ENCODE measurements at regions of chr21 and their contacts with region 1.

Region 1: GRCh38 chr21:42047821-42048613 is 23.1 kb upstream of the UMODL1 start:
- DNase-seq: peak; percentile 99
- ATAC-seq: peak; percentile 91
- H3K4me3 ChIP-seq: no peak overlapping the region
- H3K27ac ChIP-seq: peak overlapping the region; percentile 80
- H3K4me1 ChIP-seq: peaks cover 18% of the 10 kb centered on the region
- H3K27me3 ChIP-seq: no peaks in the 10 kb centered on the region; the same call in 1 of the 2 replicates
- CTCF ChIP-seq: 0 out of 2 replicates have a peak, but pooled peaks have one; percentile 31
- POLR2A ChIP-seq: no peak
- RAD21 ChIP-seq: peak; percentile 49

Region 2: GRCh38 chr21:41953831-41954653 is 94.0 kb before region 1 on chr21 and contains the start of gene C2CD2:
- CTCF ChIA-PET with region 1: no interaction called
- POLR2A ChIA-PET with region 1: interaction called, 13 read pairs
- dilution Hi-C with region 1: no loop called
- in situ Hi-C with region 1: no loop called
- intact Hi-C with region 1: no loop called
- DNase-seq: peak; percentile 73
- ATAC-seq: peak; percentile 89
- H3K4me3 ChIP-seq: peak within 1 kb of the TSS; percentile 92
- H3K27ac ChIP-seq: peak within 1 kb of the TSS; percentile 63; the same call in 1 of the 2 replicates
- H3K4me1 ChIP-seq: peaks cover 26% of the 10 kb centered on the region
- H3K27me3 ChIP-seq: no peaks in the 10 kb centered on the region
- CTCF ChIP-seq: no peak
- POLR2A ChIP-seq: peak; percentile 83
- RAD21 ChIP-seq: no peak
- total RNA-seq, gene C2CD2: 19.4 and 25.3 TPM in 2 replicates